CD4-positive, alpha-beta T cell (primary cell): ENCODE measurements at regions of chr6 and their contacts with region 1.

Region 1: DNA sequence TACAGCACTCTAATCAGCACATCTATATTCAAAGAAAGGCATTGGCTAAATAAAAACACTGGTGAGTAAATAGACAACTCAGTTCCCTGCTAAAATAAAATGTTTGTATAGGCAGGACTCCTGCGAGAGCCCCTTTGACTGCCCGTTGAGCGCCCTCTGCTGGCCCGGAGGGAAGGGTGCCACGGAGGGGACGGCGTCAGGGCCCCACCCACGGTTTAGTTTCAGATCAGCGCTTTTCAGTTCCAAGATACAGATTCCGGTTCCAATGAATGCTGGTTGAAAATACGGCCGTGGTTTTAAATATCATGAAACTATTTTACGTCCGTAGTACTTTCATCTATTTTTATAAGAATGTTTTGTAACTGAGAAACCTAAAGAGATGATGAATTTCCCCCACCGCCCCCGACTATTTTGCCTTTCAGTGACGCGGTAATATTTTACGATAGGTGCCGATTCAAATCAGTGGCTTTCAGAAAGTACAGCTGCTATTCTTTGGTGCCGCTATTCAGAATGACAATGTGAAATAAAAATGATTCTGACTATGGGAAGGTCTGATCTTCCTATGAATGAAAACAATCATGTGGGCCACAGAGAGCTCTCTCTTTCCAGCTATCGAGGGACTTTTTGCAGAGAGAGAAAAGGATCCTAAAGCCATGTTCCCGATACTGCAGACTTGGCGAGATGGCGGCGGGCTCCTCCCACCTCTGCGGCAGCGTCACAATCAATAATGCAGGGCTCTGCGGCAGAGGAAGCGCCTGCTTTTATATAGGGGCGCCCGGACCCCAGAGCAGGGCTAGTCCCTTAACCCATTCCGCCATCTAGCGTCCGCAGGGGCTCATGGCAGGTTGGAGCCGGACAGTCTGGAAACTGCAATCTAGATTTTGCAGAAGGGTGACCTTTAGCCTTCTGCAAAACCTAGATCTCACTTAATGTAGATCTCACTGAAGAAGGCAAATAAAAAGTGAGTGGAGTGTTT is 10.6 kb upstream of the CCN6 start:
- DNase-seq: peak; percentile 85 to 95 (median 91)
- ATAC-seq: peak; percentile 92
- H3K4me3 ChIP-seq: peak overlapping the region; percentile 65
- H3K4me3 Mint-ChIP-seq: peak overlapping the region; percentile 97
- H3K27ac ChIP-seq: peak overlapping the region; percentile 88 to 95
- H3K27ac Mint-ChIP-seq: peak overlapping the region; percentile 100
- H3K4me1 ChIP-seq: peaks cover 3% of the 10 kb centered on the region
- H3K4me1 Mint-ChIP-seq: peaks cover 40% of the 10 kb centered on the region
- H3K27me3 ChIP-seq: no peaks in the 10 kb centered on the region
- H3K27me3 Mint-ChIP-seq: no peaks in the 10 kb centered on the region
- CTCF ChIP-seq: peak; percentile 78

Region 2: DNA sequence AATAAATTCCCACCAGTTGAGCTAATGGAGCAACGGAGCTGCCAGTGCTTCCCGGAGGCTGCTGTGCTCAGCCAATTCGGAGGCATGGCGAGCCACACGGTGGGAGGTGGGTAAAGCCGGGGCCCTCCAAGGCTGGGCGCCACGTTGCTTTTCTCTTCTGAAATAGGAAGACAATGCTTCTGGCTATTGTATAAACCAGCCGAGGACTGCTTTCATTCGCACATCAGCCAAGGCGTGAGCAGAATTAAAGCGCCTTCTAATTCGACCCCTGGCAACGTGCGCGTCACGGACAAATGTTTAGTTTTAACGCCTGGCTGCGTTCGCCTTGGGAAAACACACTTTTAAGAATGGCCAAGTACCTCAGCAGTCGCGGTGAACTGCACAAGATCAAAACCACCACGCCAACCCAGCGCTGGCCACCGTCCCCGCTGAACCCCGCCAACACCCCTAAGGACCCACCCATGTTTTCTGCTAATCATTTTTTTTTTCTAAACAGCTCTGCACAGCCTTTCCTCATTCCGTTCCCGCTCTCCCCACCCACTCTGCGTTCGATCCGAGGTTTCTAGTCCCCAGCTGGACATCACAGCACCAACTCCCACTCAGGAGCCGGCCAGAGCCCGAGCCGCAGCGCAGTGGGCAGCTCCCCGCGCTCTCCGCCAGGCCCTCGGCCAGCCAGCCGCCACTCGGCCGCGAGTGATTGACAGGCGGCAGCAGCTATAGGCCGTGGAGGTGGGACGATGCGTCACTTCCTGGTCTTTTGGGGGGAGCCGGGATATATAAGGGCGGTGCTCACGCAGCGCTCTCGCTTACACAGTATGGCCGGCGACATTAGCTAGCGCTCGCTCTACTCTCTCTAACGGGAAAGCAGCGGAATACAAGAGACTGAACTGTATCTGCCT is 1169.1 kb before region 1 on chr6 and contains the start of gene AMD1:
- CTCF ChIA-PET with region 1: no interaction called
- POLR2A ChIA-PET with region 1: interaction called, 5 read pairs
- intact Hi-C with region 1: loop called in 1 of 2 experiments (anchors 5 kb)
- DNase-seq: peak; percentile 91 to 98 (median 94)
- ATAC-seq: peak; percentile 75
- H3K4me3 ChIP-seq: peak within 1 kb of the TSS; percentile 78
- H3K4me3 Mint-ChIP-seq: peak within 1 kb of the TSS; percentile 96
- H3K27ac ChIP-seq: peak within 1 kb of the TSS; percentile 82 to 91
- H3K27ac Mint-ChIP-seq: peak within 1 kb of the TSS; percentile 99
- H3K4me1 ChIP-seq: peaks cover 17% of the 10 kb centered on the region
- H3K4me1 Mint-ChIP-seq: peaks cover 37% of the 10 kb centered on the region
- H3K27me3 ChIP-seq: no peaks in the 10 kb centered on the region
- H3K27me3 Mint-ChIP-seq: no peaks in the 10 kb centered on the region
- CTCF ChIP-seq: no peak
- total RNA-seq, gene AMD1: 165 to 174 TPM

Region 3: DNA sequence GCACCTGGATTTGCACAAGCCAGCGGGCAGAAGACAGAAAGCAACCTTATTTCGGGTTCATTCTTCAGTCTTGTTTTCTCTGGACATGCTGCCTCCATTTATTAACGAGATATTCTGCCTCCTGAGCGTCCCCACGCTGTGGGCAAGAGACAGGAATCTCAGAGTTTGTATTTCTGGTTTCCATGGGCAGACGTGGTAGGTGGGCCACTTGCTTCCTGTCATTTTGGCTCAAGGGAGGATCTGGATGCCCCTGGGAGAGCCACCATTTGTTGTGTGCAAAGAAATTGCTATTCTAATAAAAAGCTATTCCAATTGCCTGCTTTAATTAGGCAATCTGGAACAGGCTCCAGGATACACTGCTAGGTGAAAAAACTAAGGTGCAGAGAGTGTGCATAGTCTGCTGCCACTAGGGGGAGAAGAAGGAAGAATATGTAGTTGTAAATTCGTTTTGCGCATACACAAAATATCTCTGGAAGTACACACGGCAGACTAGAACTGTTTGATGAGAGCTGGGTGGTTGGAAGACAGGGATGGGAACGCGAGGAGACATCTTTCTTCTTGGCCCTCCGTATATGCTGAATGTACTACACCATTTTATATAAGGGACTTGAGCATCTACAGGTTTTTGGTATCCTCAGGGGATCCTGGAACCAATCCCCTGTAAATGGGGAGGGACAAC is 986.1 kb before region 1 on chr6:
- CTCF ChIA-PET with region 1: no interaction called
- POLR2A ChIA-PET with region 1: no interaction called
- intact Hi-C with region 1: loop called in 1 of 2 experiments (anchors 5 kb)
- DNase-seq: peak in 8 of 14 experiments; percentile 2 to 68 (median 20)
- ATAC-seq: peak; percentile 68
- H3K4me3 ChIP-seq: no peak overlapping the region
- H3K4me3 Mint-ChIP-seq: no peak overlapping the region
- H3K27ac ChIP-seq: no peak overlapping the region
- H3K27ac Mint-ChIP-seq: no peak overlapping the region
- H3K4me1 ChIP-seq: no peaks in the 10 kb centered on the region
- H3K4me1 Mint-ChIP-seq: no peaks in the 10 kb centered on the region
- H3K27me3 ChIP-seq: no peaks in the 10 kb centered on the region
- H3K27me3 Mint-ChIP-seq: no peaks in the 10 kb centered on the region
- CTCF ChIP-seq: peak; percentile 87

Region 4: DNA sequence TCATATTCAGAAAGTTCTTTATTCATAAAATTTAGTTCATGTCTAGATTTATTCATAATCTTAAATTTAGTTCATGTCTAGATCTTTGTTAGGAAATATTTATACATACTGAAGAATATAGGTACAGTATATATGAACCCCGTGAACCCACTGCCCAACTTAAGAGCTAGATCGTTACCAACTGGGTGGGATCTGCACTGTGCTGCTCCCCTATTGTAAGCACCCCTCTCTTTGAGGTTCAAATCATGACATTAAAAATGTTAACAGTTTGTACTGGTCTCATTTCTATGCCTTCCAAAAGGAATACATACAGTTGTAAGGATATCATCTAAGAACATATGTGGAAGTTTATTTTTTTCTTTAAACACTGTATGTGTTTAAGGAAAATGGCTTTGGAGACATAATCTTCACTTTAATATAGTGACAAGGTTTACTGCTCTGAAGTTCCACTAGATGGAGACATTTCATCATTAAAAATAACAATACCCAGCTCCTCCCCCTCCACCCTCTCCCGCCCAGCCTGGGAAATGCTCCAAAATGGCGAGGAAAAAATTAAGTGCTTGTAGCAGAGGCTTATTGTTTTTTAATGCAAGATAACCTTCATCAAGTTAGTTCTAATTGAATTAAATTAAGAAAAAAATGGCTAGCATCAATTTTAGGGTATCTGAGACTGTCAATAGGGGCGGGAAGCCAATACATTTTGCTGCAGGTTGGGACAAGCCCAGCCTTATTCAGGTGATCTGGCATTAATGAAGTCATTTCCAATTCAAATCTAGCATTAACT is 333.5 kb before region 1 on chr6:
- CTCF ChIA-PET with region 1: interaction called, 21 read pairs
- POLR2A ChIA-PET with region 1: interaction called, 18 read pairs
- intact Hi-C with region 1: loop called (anchors 1 kb)
- DNase-seq: peak; percentile 21 to 85 (median 52)
- ATAC-seq: peak; percentile 80
- H3K4me3 ChIP-seq: no peak overlapping the region
- H3K4me3 Mint-ChIP-seq: peak overlapping the region; percentile 67
- H3K27ac ChIP-seq: no peak overlapping the region
- H3K27ac Mint-ChIP-seq: peak overlapping the region; percentile 93
- H3K4me1 ChIP-seq: peaks cover 41% of the 10 kb centered on the region
- H3K4me1 Mint-ChIP-seq: peaks cover 64% of the 10 kb centered on the region
- H3K27me3 ChIP-seq: no peaks in the 10 kb centered on the region
- H3K27me3 Mint-ChIP-seq: no peaks in the 10 kb centered on the region
- CTCF ChIP-seq: peak; percentile 80

Region 5: GRCh38 chr6:111873178-111874024 is 169.9 kb before region 1 on chr6 and contains the start of gene FYN:
- CTCF ChIA-PET with region 1: interaction called, 3 read pairs
- POLR2A ChIA-PET with region 1: interaction called, 8 read pairs
- intact Hi-C with region 1: loop called (anchors 1 to 5 kb)
- DNase-seq: peak; percentile 97 to 99 (median 98)
- ATAC-seq: peak; percentile 86
- H3K4me3 ChIP-seq: peak within 1 kb of the TSS; percentile 86
- H3K4me3 Mint-ChIP-seq: peak within 1 kb of the TSS; percentile 97
- H3K27ac ChIP-seq: peak within 1 kb of the TSS; percentile 87 to 94
- H3K27ac Mint-ChIP-seq: peak within 1 kb of the TSS; percentile 93
- H3K4me1 ChIP-seq: peaks cover 22% of the 10 kb centered on the region
- H3K4me1 Mint-ChIP-seq: peaks cover 54% of the 10 kb centered on the region
- H3K27me3 ChIP-seq: no peaks in the 10 kb centered on the region
- H3K27me3 Mint-ChIP-seq: no peaks in the 10 kb centered on the region
- CTCF ChIP-seq: no peak
- total RNA-seq, gene FYN: 419 TPM

Region 6: GRCh38 chr6:112029045-112029822 is 14.1 kb before region 1 on chr6:
- CTCF ChIA-PET with region 1: interaction called, 22 read pairs
- POLR2A ChIA-PET with region 1: interaction called, 62 read pairs
- intact Hi-C with region 1: loop called in 1 of 2 experiments (anchors 1 kb)
- DNase-seq: peak; percentile 41 to 82 (median 55)
- ATAC-seq: no peak
- H3K4me3 ChIP-seq: no peak overlapping the region
- H3K4me3 Mint-ChIP-seq: peak overlapping the region; percentile 62
- H3K27ac ChIP-seq: peak overlapping the region; percentile 62 to 92
- H3K27ac Mint-ChIP-seq: peak overlapping the region; percentile 93
- H3K4me1 ChIP-seq: peaks cover 62% of the 10 kb centered on the region
- H3K4me1 Mint-ChIP-seq: peaks cover 83% of the 10 kb centered on the region
- H3K27me3 ChIP-seq: no peaks in the 10 kb centered on the region
- H3K27me3 Mint-ChIP-seq: no peaks in the 10 kb centered on the region
- CTCF ChIP-seq: peak; percentile 61